ENCODE measurements at regions of chr1 and their contacts with region 1.

Region 1: DNA sequence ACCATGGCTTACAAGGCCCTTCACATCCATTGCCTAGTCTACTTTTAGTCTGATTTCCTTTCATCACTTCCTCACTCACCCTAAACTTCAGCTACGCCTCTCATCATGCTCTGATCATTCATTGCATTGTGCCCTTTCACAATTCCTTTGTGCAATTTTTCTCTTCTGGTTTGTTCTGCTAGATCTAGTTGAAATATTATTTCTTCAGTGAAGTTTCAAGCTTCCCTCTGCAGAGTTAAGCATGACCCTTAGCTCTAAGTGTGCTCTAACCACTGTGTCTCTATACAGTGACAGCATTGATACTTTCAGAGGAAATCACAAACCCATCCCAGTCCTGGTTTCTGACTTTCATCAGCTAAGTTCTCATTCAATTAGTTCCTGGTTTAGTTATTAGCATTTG is 166.1 kb downstream of the PLA2G4A start:
- DNase-seq: no peak
- ATAC-seq: no peak
- H3K4me3 ChIP-seq: no peak overlapping the region
- H3K4me1 ChIP-seq: no peaks in the 10 kb centered on the region
- CTCF ChIP-seq: no peak

Region 2: GRCh38 chr1:186404454-186405051 is 590.3 kb before region 1 on chr1:
- intact Hi-C with region 1: loop called in 1 of 2 experiments (anchors 10 kb)
- DNase-seq: no peak
- ATAC-seq: peak; percentile 57
- H3K4me3 ChIP-seq: no peak overlapping the region
- H3K4me1 ChIP-seq: no peaks in the 10 kb centered on the region
- CTCF ChIP-seq: peak; percentile 37

Region 3: GRCh38 chr1:186595969-186596368 is 398.9 kb before region 1 on chr1:
- intact Hi-C with region 1: loop called in 1 of 2 experiments (anchors 10 kb)
- DNase-seq: no peak
- ATAC-seq: no peak
- H3K4me3 ChIP-seq: no peak overlapping the region
- H3K4me1 ChIP-seq: no peaks in the 10 kb centered on the region
- CTCF ChIP-seq: no peak

Region 4: GRCh38 chr1:186839041-186839400 is 155.9 kb before region 1 on chr1:
- intact Hi-C with region 1: no loop called
- DNase-seq: no peak
- ATAC-seq: peak; percentile 14
- H3K4me3 ChIP-seq: no peak overlapping the region
- H3K4me1 ChIP-seq: peaks cover 4% of the 10 kb centered on the region
- CTCF ChIP-seq: no peak

Region 5: GRCh38 chr1:186950547-186950946 is 44.4 kb before region 1 on chr1:
- intact Hi-C with region 1: no loop called
- DNase-seq: no peak
- ATAC-seq: no peak
- H3K4me3 ChIP-seq: no peak overlapping the region
- H3K4me1 ChIP-seq: no peaks in the 10 kb centered on the region
- CTCF ChIP-seq: no peak

Measured in mucosa of descending colon (tissue), 3 donors.